ENCODE measurements at regions of chrX and their contacts with region 1.

Region 1: GRCh38 chrX:41481264-41482109 is 34.3 kb downstream of the NYX start:
- DNase-seq: no peak
- H3K4me3 ChIP-seq: no peak overlapping the region
- H3K27ac ChIP-seq: no peak overlapping the region
- H3K4me1 ChIP-seq: no peaks in the 10 kb centered on the region
- H3K27me3 ChIP-seq: no peaks in the 10 kb centered on the region
- CTCF ChIP-seq: no peak
- POLR2A ChIP-seq: no peak

Region 2: DNA sequence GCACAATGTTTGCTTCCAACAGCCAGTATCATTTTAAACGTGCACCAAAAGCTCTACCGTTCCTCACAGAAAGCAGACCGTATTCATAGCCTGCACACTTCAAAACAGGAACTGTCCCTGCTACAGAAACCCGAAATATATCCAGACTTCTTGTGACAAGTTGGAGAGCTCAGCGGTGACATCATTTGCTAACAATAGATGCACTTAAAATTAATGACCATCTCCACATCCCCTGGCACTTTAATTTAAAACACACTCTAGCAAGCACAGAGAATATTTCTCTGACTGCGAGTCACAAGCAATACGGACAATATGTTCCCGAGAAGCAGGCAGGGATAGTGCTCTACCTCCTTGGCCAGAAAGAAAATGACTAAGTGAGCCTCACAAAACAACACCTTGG is 31.9 kb before region 1 on chrX:
- intact Hi-C with region 1: loop called (anchors 5 kb)
- DNase-seq: no peak
- H3K4me3 ChIP-seq: no peak overlapping the region
- H3K27ac ChIP-seq: peak overlapping the region; percentile 38 to 39
- H3K4me1 ChIP-seq: no peaks in the 10 kb centered on the region
- H3K27me3 ChIP-seq: no peaks in the 10 kb centered on the region
- CTCF ChIP-seq: no peak
- POLR2A ChIP-seq: no peak

Measured in prostate gland (tissue), 2 donors.